Activated CD8-positive, alpha-beta memory T cell treated with anti-CD3 and anti-CD28 coated beads, Interleukin-2, amount 10 ng/mL, durations not matched to agents 7 days and 5 days (primary cell): ENCODE measurements at regions of chr9 and their contacts with region 1.

Region 1: GRCh38 chr9:37798692-37799091 is 1.9 kb upstream of the DCAF10 start:
- DNase-seq: no peak
- ATAC-seq: no peak
- H3K4me3 Mint-ChIP-seq: peak overlapping the region; percentile 96
- H3K27ac Mint-ChIP-seq: peak overlapping the region; percentile 82
- H3K4me1 Mint-ChIP-seq: peaks cover 39% of the 10 kb centered on the region
- H3K27me3 Mint-ChIP-seq: no peaks in the 10 kb centered on the region

Region 2: GRCh38 chr9:37784616-37785483 is 13.8 kb before region 1 on chr9 and contains the start of gene EXOSC3:
- CTCF ChIA-PET with region 1: interaction called, 19 read pairs
- DNase-seq: peak; percentile 93
- ATAC-seq: peak; percentile 89
- H3K4me3 Mint-ChIP-seq: peak within 1 kb of the TSS; percentile 96
- H3K27ac Mint-ChIP-seq: peak within 1 kb of the TSS; percentile 97
- H3K4me1 Mint-ChIP-seq: peaks cover 38% of the 10 kb centered on the region
- H3K27me3 Mint-ChIP-seq: no peaks in the 10 kb centered on the region
- total RNA-seq, gene EXOSC3: 88.1 to 98.7 TPM

Region 3: DNA sequence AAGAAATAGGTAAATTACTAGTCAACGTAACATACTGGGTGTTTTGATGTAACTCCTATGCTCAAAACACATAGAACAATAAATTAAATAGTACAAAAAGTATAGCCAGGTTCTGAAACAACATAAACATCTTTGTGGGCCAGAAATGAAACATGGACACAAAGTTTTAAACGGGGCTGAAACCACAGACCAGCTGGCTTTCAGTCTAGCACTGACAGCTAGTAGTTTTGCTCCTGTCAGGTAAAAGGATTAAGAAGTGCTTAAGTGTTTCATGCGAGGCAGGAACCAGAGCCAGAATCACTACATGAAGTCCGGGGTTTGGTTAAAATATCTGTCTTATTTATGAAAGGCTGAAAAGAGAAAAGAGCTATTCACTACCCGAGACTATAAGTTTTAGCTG is 21.4 kb after region 1 on chr9:
- CTCF ChIA-PET with region 1: no interaction called
- DNase-seq: no peak
- ATAC-seq: no peak
- H3K4me3 Mint-ChIP-seq: no peak overlapping the region
- H3K27ac Mint-ChIP-seq: no peak overlapping the region
- H3K4me1 Mint-ChIP-seq: peaks cover 3% of the 10 kb centered on the region
- H3K27me3 Mint-ChIP-seq: no peaks in the 10 kb centered on the region